ENCODE measurements at regions of chr12 and their contacts with region 1.

Region 1: DNA sequence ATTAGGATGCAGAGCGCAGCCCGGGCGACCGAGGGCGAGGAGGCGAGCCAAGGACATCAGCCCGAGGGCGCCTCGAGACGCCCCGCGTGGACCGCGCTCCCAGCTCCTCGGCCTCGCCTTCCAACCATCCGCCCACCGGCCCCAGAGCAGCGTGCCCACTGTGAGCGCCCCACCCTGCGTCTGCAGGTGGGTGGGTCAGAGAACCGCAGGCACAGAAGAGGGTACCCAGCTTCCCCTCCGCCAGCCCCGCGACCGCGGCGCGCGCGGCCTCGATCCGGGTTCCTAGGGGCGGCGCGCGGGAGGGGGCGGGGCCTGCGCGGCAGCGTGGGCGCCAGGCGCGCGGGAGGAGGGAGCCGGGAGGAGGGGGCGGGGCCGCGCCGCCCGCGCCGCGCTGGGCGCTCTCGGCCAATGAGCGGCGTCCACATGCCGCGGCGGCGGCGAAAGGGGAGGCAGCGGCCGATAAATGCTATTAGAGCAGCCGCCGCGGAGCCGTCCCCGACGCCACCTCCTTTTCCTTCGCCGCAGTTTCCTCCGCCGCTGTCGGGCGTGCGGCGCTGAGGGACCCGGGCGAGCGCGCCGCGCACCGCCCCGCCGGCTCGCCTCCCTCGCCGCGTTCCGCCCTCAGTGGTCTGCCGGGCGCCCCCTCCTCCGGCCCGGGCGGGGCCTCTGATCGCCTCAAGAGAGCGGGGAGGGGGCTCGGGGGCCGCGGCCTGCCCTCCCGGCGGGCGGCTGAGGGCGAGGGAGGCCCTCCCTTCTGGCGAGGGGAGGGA is at the start of gene ATP2A2:
- DNase-seq: peak; percentile 79 to 85
- ATAC-seq: peak; percentile 75 to 82
- H3K4me3 ChIP-seq: peak within 1 kb of the TSS; percentile 82 to 93 (median 90)
- H3K27ac ChIP-seq: peak within 1 kb of the TSS; percentile 93 to 97 (median 96)
- H3K4me1 ChIP-seq: peaks cover 0 to 18% of the 10 kb centered on the region in 2 donors
- H3K27me3 ChIP-seq: no peaks in the 10 kb centered on the region
- CTCF ChIP-seq: no peak
- POLR2A ChIP-seq: peak; percentile 97 to 99
- total RNA-seq, gene ATP2A2: 788 to 1,983 (median 1,302) TPM

Region 2: DNA sequence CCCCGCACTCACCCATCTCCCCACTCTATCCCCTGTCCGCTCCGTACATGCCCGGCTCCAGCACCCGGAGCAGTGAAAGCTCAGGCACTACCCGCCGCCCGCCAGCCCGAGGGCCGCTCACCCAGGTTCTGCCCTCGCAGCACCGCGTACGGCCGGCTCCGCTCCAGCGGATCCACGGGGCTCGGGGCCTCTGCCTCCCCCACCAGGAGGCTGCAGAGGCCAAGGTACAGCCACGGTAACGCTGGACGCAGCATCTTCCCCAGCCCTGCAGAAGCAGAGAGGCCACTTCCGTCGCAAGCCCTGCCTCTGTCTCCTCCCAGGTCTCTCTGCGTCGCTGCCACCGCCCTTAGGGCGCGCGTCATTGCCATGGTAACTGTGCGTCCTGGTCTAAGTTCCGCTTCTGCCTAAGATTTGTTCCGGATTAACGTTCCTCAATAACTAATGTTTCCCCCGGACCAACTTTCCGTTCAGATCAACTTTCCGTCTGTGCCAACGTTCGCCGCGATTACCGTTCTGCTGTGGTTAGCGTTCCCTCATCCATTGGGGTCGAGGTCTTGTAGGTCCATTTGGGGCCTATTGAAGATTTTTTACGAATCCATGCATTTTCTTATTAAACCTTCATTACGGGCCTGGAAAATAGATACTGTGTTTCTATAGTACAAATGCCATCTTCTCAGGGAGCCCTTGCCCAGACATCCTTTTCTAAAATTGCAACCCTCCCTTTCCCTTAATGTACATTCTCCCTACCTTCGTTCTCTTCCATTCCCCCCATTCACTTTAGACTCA is 232.5 kb before region 1 on chr12 and contains the start of gene C12orf76:
- in situ Hi-C with region 1: no loop called
- intact Hi-C with region 1: loop called (anchors 10 kb)
- DNase-seq: peak; percentile 75 to 82
- ATAC-seq: peak; percentile 94 to 95
- H3K4me3 ChIP-seq: peak within 1 kb of the TSS; percentile 75 to 95 (median 81)
- H3K27ac ChIP-seq: peak within 1 kb of the TSS; percentile 48 to 69 (median 64)
- H3K4me1 ChIP-seq: peaks cover 13 to 19% of the 10 kb centered on the region in 2 donors
- H3K27me3 ChIP-seq: no peaks in the 10 kb centered on the region
- CTCF ChIP-seq: no peak
- POLR2A ChIP-seq: peak in 1 of 2 donors; percentile 25
- total RNA-seq, gene C12orf76: 3.0 to 22.8 (median 8.0) TPM

Region 3: DNA sequence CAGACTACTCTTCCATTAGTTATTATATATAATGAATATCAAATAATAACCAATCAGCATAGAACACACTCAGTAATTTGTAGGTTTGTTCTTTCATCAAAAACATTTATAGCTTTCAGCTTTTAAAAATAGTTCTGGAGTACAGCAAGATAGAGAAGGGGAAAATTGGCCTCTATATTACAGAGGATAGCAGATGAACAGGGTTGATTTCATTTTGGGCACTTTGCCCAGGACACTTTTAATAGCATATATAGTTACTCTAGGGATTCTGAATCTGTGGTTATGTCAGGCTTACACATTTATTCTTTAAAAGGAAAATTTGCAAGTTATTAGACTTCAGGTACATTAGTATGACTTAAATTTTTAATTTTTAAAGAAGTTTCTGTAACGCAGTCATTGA is 104.2 kb before region 1 on chr12:
- in situ Hi-C with region 1: no loop called
- intact Hi-C with region 1: no loop called
- DNase-seq: no peak
- ATAC-seq: peak; percentile 86 to 88
- H3K4me3 ChIP-seq: no peak overlapping the region
- H3K27ac ChIP-seq: peak overlapping the region; percentile 58 to 78 (median 63)
- H3K4me1 ChIP-seq: peaks cover 36 to 44% of the 10 kb centered on the region in 2 donors
- H3K27me3 ChIP-seq: no peaks in the 10 kb centered on the region
- CTCF ChIP-seq: no peak
- POLR2A ChIP-seq: no peak

Region 4: GRCh38 chr12:110224379-110225304 is 56.3 kb before region 1 on chr12:
- in situ Hi-C with region 1: no loop called
- intact Hi-C with region 1: loop called (anchors 2 kb)
- DNase-seq: peak; percentile 36 to 44
- ATAC-seq: peak; percentile 81 to 91
- H3K4me3 ChIP-seq: peak overlapping the region; percentile 4 to 34 (median 18)
- H3K27ac ChIP-seq: peak overlapping the region; percentile 75 to 82 (median 80)
- H3K4me1 ChIP-seq: peaks cover 25 to 41% of the 10 kb centered on the region in 2 donors
- H3K27me3 ChIP-seq: no peaks in the 10 kb centered on the region
- CTCF ChIP-seq: peak in 4 of 5 experiments; percentile 53 to 76 (median 62)
- POLR2A ChIP-seq: no peak

Region 5: GRCh38 chr12:110245369-110245772 is 35.6 kb before region 1 on chr12:
- in situ Hi-C with region 1: no loop called
- intact Hi-C with region 1: loop called (anchors 5 kb)
- DNase-seq: no peak
- ATAC-seq: no peak
- H3K4me3 ChIP-seq: no peak overlapping the region
- H3K27ac ChIP-seq: peak overlapping the region; percentile 89 to 94 (median 91)
- H3K4me1 ChIP-seq: peaks cover 50 to 54% of the 10 kb centered on the region in 2 donors
- H3K27me3 ChIP-seq: no peaks in the 10 kb centered on the region
- CTCF ChIP-seq: peak in 1 of 5 experiments; percentile 9
- POLR2A ChIP-seq: no peak

Region 6: GRCh38 chr12:110304061-110304551 is 23.1 kb after region 1 on chr12:
- in situ Hi-C with region 1: no loop called
- intact Hi-C with region 1: no loop called
- DNase-seq: no peak
- ATAC-seq: no peak
- H3K4me3 ChIP-seq: peak overlapping the region in 1 of 4 donors; percentile 2
- H3K27ac ChIP-seq: peak overlapping the region; percentile 30 to 97 (median 92)
- H3K4me1 ChIP-seq: peaks cover 56 to 77% of the 10 kb centered on the region in 2 donors
- H3K27me3 ChIP-seq: no peaks in the 10 kb centered on the region
- CTCF ChIP-seq: no peak
- POLR2A ChIP-seq: no peak

Region 7: GRCh38 chr12:110320550-110320949 is 39.6 kb after region 1 on chr12:
- in situ Hi-C with region 1: no loop called
- intact Hi-C with region 1: no loop called
- DNase-seq: no peak
- ATAC-seq: no peak
- H3K4me3 ChIP-seq: no peak overlapping the region
- H3K27ac ChIP-seq: peak overlapping the region; percentile 19 to 86 (median 71)
- H3K4me1 ChIP-seq: peaks cover 32 to 62% of the 10 kb centered on the region in 2 donors
- H3K27me3 ChIP-seq: no peaks in the 10 kb centered on the region
- CTCF ChIP-seq: no peak
- POLR2A ChIP-seq: no peak

Region 8: DNA sequence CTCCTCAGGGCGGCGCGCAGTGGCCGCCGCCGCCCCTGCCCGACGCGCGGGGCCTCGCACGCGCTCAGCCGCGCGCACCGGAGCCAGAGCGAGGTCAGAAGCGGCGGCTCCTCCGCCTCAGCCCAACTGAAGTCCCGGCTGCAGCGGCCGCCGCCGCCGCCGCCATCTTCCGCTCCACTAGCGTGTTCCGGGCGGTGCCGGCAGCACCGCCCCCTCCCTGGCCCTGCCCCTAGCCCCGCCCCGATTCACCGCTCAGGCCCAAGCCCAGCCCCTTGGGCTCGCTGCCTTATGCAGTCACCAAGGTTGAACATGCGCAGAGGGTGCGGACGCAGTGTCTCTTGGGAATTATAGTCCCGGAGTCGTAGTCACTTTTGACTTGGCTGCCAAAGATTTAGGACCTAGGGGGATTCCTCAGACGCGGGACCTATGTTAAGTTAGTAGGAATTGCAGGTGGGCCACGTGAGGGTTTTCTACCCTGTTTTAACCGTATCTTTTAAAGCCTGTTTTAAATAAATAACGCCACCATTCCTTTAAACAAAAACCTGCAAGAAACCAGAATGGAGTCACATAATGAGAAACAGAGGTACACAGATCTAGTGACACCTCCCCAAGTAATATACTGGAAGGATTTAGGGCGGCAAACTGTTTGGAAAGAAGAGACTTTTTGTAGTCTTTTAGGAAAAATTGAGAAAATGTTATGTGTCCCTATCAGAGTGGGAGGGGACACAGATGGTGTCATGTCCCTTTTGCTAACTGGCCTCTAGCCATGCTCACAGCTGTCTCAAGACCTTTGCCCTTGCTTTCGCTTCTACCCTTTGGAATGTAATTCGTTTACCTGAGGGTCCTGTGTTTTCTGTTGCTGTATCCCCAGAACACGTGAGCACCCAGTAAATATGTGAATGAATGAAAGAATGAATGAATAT is 302.4 kb after region 1 on chr12 and contains the start of gene PPTC7:
- in situ Hi-C with region 1: no loop called
- intact Hi-C with region 1: loop called (anchors 10 kb)
- DNase-seq: peak; percentile 96 to 97
- ATAC-seq: peak; percentile 60 to 70
- H3K4me3 ChIP-seq: peak within 1 kb of the TSS; percentile 67 to 83 (median 78)
- H3K27ac ChIP-seq: peak within 1 kb of the TSS; percentile 91 to 98 (median 94)
- H3K4me1 ChIP-seq: peaks cover 56 to 58% of the 10 kb centered on the region in 2 donors
- H3K27me3 ChIP-seq: no peaks in the 10 kb centered on the region
- CTCF ChIP-seq: peak in 1 of 5 experiments; percentile 7
- POLR2A ChIP-seq: peak; percentile 98 to 99
- total RNA-seq, gene PPTC7: 27.6 to 85.8 (median 58.4) TPM